A549 (cell line): ENCODE measurements at regions of chr11 and their contacts with region 1.

Region 1: GRCh38 chr11:71580057-71581003 is 2.3 kb downstream of the KRTAP5-11 start:
- DNase-seq: peak; percentile 65 to 69
- ATAC-seq: peak; percentile 84 to 94
- H3K4me3 ChIP-seq: no peak overlapping the region
- H3K27ac ChIP-seq: no peak overlapping the region
- H3K4me1 ChIP-seq: 0 out of 3 replicates have a peak, but pooled peaks cover 2% of the 10 kb centered on the region
- CTCF ChIP-seq: peak; percentile 72
- EP300 ChIP-seq: no peak
- POLR2A ChIP-seq: no peak
- RAD21 ChIP-seq: peak in 1 of 2 experiments; percentile 32; a peak in 1 of 5 replicates

Region 2: DNA sequence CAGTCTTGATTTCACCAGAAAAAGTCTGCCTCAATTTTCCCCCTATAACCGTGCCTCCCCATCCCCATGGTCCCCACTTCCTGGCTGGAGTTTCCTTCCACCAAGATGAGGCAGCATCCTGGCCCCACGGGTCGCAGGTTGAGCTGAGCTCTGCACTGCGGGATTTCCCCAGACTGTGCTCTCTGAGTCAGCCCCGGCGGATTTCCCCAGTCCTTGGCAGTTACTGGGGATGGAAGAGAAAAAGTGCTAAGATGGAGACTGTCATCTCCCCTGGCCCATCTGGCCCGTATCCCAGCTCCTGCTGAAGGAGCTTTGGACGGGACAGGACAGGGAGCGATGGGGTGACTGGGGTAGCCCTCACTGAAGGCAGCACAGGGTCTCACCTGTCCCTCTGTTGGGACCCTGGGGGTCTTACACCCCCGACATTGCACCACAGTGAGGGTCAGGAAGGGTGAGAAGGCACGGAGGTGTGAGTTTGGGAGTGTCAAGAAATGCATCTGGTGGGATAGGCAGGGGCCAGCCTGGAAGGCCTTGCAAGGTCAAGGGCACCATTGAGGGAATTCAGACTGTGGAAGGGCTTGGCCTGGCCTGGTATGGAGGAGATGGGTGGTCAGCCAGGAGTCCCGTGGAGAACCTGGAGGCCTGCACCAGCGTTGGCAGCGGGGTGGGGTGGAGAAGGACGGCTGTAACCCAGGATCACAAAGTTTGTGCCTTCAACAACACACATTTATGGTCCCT is 90.8 kb before region 1 on chr11:
- CTCF ChIA-PET with region 1: no interaction called
- POLR2A ChIA-PET with region 1: no interaction called
- DNase-seq: peak; percentile 23 to 27
- ATAC-seq: peak in 1 of 2 experiments; percentile 66; a peak in 3 of 6 replicates
- H3K4me3 ChIP-seq: no peak overlapping the region
- H3K27ac ChIP-seq: no peak overlapping the region
- H3K4me1 ChIP-seq: peaks cover 13% of the 10 kb centered on the region; the same call in 2 of the 3 replicates
- CTCF ChIP-seq: no peak
- EP300 ChIP-seq: no peak
- POLR2A ChIP-seq: no peak
- RAD21 ChIP-seq: no peak

Region 3: DNA sequence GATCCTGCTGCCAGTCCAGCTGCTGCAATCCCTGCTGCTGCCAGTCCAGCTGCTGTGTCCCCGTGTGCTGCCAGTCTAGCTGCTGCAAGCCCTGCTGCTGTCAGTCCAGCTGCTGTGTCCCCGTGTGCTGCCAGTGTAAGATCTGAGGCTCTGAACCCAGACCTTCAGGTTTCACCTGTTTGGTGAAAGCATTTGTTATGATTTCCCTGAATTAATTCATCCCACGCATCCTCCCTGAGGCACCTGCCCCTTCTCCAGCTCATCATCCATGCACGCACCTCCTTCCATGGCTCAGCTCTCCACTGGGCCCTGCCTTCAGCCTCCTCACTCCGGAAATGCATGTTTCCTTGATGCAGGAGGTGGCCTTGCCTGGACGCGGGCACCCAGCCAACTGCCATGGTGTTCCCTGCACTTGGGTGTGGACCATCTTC is 14.3 kb before region 1 on chr11:
- CTCF ChIA-PET with region 1: interaction called, 11 read pairs
- POLR2A ChIA-PET with region 1: no interaction called
- DNase-seq: no peak
- ATAC-seq: no peak
- H3K4me3 ChIP-seq: no peak overlapping the region
- H3K27ac ChIP-seq: no peak overlapping the region
- H3K4me1 ChIP-seq: no peaks in the 10 kb centered on the region
- CTCF ChIP-seq: no peak
- EP300 ChIP-seq: no peak
- POLR2A ChIP-seq: no peak
- RAD21 ChIP-seq: no peak